Colonic mucosa (tissue), 4 donors: ENCODE measurements at regions of chr4 and their contacts with region 1.

Region 1: GRCh38 chr4:189792924-189793618 is 147.6 kb upstream of the FRG1 start:
- DNase-seq: peak; percentile 63
- H3K4me3 ChIP-seq: no peak overlapping the region
- H3K27ac ChIP-seq: no peak overlapping the region
- H3K4me1 ChIP-seq: no peaks in the 10 kb centered on the region
- H3K27me3 ChIP-seq: no peaks in the 10 kb centered on the region
- CTCF ChIP-seq: peak; percentile 84

Region 2: GRCh38 chr4:189436207-189436606 is 356.9 kb before region 1 on chr4:
- intact Hi-C with region 1: loop called (anchors 5 kb)
- DNase-seq: no peak
- H3K4me3 ChIP-seq: no peak overlapping the region
- H3K27ac ChIP-seq: no peak overlapping the region
- H3K4me1 ChIP-seq: no peaks in the 10 kb centered on the region
- H3K27me3 ChIP-seq: no peaks in the 10 kb centered on the region
- CTCF ChIP-seq: no peak

Region 3: GRCh38 chr4:189979196-189980047 is 186.4 kb after region 1 on chr4:
- intact Hi-C with region 1: no loop called
- DNase-seq: no peak
- H3K4me3 ChIP-seq: no peak overlapping the region
- H3K27ac ChIP-seq: no peak overlapping the region
- H3K4me1 ChIP-seq: no peaks in the 10 kb centered on the region
- H3K27me3 ChIP-seq: no peaks in the 10 kb centered on the region
- CTCF ChIP-seq: no peak